H1 (cell line): ENCODE measurements at regions of chr11 and their contacts with region 1.

Region 1: GRCh38 chr11:95790123-95790932 is at the start of gene CEP57:
- DNase-seq: peak; percentile 80 to 94
- H3K4me3 ChIP-seq: peak within 1 kb of the TSS; percentile 84 to 95 (median 92)
- H3K27ac ChIP-seq: peak within 1 kb of the TSS; percentile 98
- H3K4me1 ChIP-seq: peaks cover 0 to 9% (median 0%) of the 10 kb centered on the region in 4 experiments; a peak in 1 of 7 replicates
- H3K27me3 ChIP-seq: no peaks in the 10 kb centered on the region
- CTCF ChIP-seq: no peak; a peak in 1 of 4 replicates
- EP300 ChIP-seq: no peak
- POLR2A ChIP-seq: peak; percentile 75 to 78
- RAD21 ChIP-seq: no peak
- total RNA-seq, gene CEP57: 71.2 and 72.7 TPM in 2 replicates

Region 2: DNA sequence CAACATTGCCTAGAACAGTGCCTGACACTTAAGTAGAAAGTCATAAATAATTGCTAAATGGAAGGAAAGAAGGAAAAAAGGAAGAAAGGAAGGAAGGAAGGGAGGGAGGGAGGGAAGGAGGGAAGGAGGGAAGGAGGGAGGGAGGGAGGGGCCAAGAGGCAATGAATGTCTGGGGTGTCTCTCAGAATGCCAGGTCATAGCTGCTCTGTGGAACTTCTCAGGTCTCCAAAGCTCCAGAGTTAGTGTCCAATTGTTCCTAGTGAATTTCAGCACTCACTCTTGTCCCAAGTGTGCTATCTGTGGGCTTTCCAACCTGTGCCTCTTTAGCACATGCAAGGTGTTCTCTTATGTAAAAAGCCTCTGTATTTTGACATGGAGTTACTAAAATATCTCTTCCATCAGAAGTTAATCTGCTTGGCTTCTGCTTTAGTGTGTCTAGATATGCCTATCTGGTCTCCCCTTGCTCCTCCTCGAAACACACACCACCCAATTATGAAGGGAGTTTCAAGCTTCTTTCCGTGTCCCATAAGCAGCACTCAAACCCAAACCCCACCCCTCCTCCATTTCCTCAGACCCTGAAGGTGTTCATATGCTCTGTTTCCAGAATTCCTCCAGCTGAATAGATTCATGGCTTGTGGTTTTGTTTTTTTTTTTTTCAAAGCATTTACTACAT is 57.3 kb before region 1 on chr11:
- CTCF ChIA-PET with region 1: no interaction called
- POLR2A ChIA-PET with region 1: no interaction called
- DNase-seq: no peak
- H3K4me3 ChIP-seq: no peak overlapping the region
- H3K27ac ChIP-seq: no peak overlapping the region
- H3K4me1 ChIP-seq: no peaks in the 10 kb centered on the region; a peak in 1 of 7 replicates
- H3K27me3 ChIP-seq: no peaks in the 10 kb centered on the region
- CTCF ChIP-seq: no peak
- EP300 ChIP-seq: no peak
- POLR2A ChIP-seq: no peak
- RAD21 ChIP-seq: no peak

Region 3: DNA sequence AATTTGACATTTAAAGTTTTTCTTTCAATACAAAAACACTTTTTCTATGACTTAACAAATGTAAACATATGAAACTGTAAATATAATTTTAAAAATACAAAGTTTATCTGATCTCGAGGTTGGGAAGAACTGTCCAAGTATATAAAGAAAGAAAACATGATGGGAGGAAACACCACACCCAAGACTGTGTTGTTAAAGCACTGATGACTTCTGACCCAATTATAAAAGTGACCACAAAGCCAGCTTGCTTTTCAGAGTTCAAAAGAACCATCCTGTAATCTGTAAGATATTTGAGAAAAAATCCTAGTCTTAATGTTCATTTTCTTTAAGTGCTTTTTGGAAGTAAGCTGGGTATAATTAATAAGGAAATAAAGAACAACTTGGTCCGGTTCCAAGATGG is 15.5 kb after region 1 on chr11:
- CTCF ChIA-PET with region 1: interaction called, 8 read pairs
- POLR2A ChIA-PET with region 1: interaction called, 20 read pairs
- DNase-seq: no peak
- H3K4me3 ChIP-seq: no peak overlapping the region
- H3K27ac ChIP-seq: no peak overlapping the region
- H3K4me1 ChIP-seq: no peaks in the 10 kb centered on the region
- H3K27me3 ChIP-seq: no peaks in the 10 kb centered on the region
- CTCF ChIP-seq: no peak
- EP300 ChIP-seq: no peak
- POLR2A ChIP-seq: no peak
- RAD21 ChIP-seq: no peak